HepG2 (cell line): ENCODE measurements at regions of chr15 and their contacts with region 1.

Region 1: GRCh38 chr15:40098489-40099261 is 10.0 kb downstream of the BMF start:
- DNase-seq: peak; percentile 97
- ATAC-seq: peak; percentile 95
- H3K4me3 ChIP-seq: peak overlapping the region in 1 of 3 experiments; percentile 24; a peak in 2 of 6 replicates
- H3K27ac ChIP-seq: peak overlapping the region; percentile 87
- H3K4me1 ChIP-seq: peaks cover 89% of the 10 kb centered on the region
- H3K27me3 ChIP-seq: no peaks in the 10 kb centered on the region
- CTCF ChIP-seq: 0 out of 2 replicates have a peak, but pooled peaks have one; percentile 20
- EP300 ChIP-seq: peak; percentile 96 to 100
- POLR2A ChIP-seq: peak; percentile 24 to 69; a peak in 2 of 4 replicates
- RAD21 ChIP-seq: peak; percentile 65; the same call in 1 of the 2 replicates

Region 2: DNA sequence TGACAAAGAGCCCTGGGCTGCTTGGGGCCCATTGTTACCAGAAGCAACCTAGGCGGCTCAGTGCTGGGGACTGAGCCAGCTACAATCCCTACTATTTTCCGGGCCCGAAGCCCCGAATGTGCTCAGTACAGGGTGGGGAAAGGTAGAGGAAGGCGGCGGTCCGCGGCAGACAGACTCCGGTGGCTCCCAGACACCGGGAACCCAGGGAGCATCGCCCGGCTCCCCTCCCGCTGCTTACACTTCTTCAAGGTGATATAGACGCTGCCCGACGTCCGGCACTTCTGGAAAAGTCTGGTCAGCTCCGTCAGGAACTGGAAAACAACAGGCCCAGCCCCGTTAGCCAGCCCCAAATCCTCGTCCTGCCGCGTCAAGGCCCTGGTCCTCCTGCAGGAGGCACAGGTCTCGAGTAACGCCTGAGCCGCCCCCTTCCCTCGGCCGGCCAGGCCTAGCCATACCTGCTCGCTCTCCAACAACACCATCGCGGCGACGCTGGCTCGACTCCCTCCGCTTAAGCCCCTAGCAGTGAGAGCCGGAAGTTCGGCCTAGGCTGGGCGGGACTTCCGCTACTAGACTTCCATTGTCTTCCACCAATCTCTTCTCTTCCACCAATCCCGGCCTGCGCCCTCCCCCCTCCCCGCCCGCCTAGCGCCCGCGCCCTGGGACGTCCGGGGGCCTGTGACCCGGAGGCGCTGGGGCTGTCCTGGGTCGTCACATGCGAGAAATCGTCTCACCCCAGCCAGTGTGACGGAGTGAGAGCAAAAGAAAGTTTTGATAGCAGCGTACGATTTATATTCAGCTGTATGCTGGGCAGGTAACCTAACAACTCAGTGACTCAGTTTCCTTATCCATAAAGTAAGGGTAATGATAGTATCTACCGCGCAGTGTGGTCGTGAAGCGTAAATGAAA is 59.8 kb before region 1 on chr15 and contains the start of gene SRP14:
- CTCF ChIA-PET with region 1: no interaction called
- POLR2A ChIA-PET with region 1: interaction called, 27 read pairs
- in situ Hi-C with region 1: no loop called
- intact Hi-C with region 1: no loop called
- DNase-seq: peak; percentile 91
- ATAC-seq: peak; percentile 93
- H3K4me3 ChIP-seq: peak within 1 kb of the TSS; percentile 72 to 96 (median 76)
- H3K27ac ChIP-seq: peak within 1 kb of the TSS; percentile 86
- H3K4me1 ChIP-seq: peaks cover 34% of the 10 kb centered on the region
- H3K27me3 ChIP-seq: no peaks in the 10 kb centered on the region; a peak in 2 of 5 replicates
- CTCF ChIP-seq: peak; percentile 15
- EP300 ChIP-seq: 0 out of 4 replicates have a peak, but pooled peaks of 1 of the 2 experiments have one; percentile 17
- POLR2A ChIP-seq: peak; percentile 91 to 95
- RAD21 ChIP-seq: no peak
- total RNA-seq, gene SRP14: 208 and 346 TPM in 2 replicates

Region 3: DNA sequence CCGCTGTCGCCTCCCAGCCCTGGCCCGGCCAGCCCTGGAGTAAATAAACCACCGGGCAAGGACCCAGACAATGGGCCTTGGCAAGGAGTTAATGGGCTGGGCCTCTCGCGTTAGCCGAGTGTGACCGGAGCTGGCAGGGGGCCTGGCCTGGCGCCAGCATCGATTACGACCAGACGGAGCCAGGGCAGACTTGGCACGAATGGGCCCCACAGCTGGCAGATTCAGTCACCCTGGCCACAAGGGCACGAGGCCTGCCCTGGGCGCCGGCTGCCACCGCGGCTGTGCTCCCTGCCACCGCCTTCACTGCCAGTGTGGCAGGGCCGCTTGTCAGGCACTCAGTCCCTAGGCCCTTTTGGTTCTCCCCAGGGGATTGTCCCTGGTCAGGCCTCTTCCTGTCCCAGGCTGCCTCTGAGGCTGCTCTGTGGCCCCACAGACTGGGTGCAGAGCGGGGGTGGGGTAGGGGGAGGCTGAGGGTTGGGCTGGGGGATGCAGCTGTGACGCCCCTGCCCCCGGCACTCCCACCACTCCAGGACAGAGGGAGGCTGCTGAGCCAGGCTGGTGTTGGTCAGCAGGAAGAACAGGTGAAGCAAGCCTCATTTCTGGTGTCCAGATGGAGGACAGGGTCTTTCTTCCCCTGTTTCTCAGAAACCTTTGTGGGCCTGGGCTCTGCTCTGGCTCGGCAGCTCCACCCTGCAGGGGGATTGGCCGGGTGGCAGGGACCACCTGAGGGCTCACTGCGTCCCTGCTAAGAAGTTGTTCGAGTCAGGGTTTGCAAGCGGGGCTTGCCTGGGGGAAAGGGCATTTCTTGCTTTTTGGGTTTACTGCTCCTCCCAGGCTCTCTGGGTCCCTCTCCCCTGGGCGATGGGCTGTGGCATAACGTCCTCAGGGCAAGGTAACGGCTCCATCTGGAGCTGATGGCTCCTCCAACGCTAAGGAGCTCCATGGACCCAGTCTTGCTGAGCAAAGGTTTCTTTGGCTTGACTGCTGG is 29.2 kb before region 1 on chr15:
- CTCF ChIA-PET with region 1: no interaction called
- POLR2A ChIA-PET with region 1: interaction called, 29 read pairs
- in situ Hi-C with region 1: no loop called
- intact Hi-C with region 1: no loop called
- DNase-seq: peak; percentile 76
- ATAC-seq: peak; percentile 80
- H3K4me3 ChIP-seq: peak overlapping the region; percentile 55 to 69 (median 58); a peak in 5 of 6 replicates
- H3K27ac ChIP-seq: peak overlapping the region; percentile 69
- H3K4me1 ChIP-seq: peaks cover 47% of the 10 kb centered on the region
- H3K27me3 ChIP-seq: no peaks in the 10 kb centered on the region
- CTCF ChIP-seq: no peak; the same call in 1 of the 2 replicates
- EP300 ChIP-seq: no peak
- POLR2A ChIP-seq: peak in 1 of 2 experiments; percentile 50; a peak in 1 of 4 replicates
- RAD21 ChIP-seq: peak; percentile 66

Region 4: GRCh38 chr15:40081691-40082194 is 16.9 kb before region 1 on chr15:
- CTCF ChIA-PET with region 1: no interaction called
- POLR2A ChIA-PET with region 1: interaction called, 371 read pairs
- in situ Hi-C with region 1: no loop called
- intact Hi-C with region 1: loop called (anchors 1 kb)
- DNase-seq: peak; percentile 96
- ATAC-seq: peak; percentile 98
- H3K4me3 ChIP-seq: peak overlapping the region; percentile 46 to 70 (median 69)
- H3K27ac ChIP-seq: peak overlapping the region; percentile 95
- H3K4me1 ChIP-seq: peaks cover 70% of the 10 kb centered on the region
- H3K27me3 ChIP-seq: no peaks in the 10 kb centered on the region; a peak in 1 of 5 replicates
- CTCF ChIP-seq: peak; percentile 33; the same call in 1 of the 2 replicates
- EP300 ChIP-seq: peak; percentile 81 to 92; a peak in 3 of 4 replicates
- POLR2A ChIP-seq: peak; percentile 69 to 74; a peak in 3 of 4 replicates
- RAD21 ChIP-seq: no peak; the same call in 1 of the 2 replicates

Region 5: GRCh38 chr15:40160689-40161688 is 62.3 kb after region 1 on chr15 and contains the start of gene BUB1B:
- CTCF ChIA-PET with region 1: interaction called, 3 read pairs
- POLR2A ChIA-PET with region 1: interaction called, 4 read pairs
- in situ Hi-C with region 1: no loop called
- intact Hi-C with region 1: loop called (anchors 2 kb)
- DNase-seq: peak; percentile 95
- ATAC-seq: peak; percentile 91
- H3K4me3 ChIP-seq: peak within 1 kb of the TSS; percentile 77 to 98 (median 91)
- H3K27ac ChIP-seq: peak within 1 kb of the TSS; percentile 74
- H3K4me1 ChIP-seq: peaks cover 58% of the 10 kb centered on the region
- H3K27me3 ChIP-seq: no peaks in the 10 kb centered on the region; a peak in 2 of 5 replicates
- CTCF ChIP-seq: peak; percentile 15; the same call in 1 of the 2 replicates
- EP300 ChIP-seq: no peak
- POLR2A ChIP-seq: peak; percentile 62 to 69; a peak in 3 of 4 replicates
- RAD21 ChIP-seq: no peak; the same call in 1 of the 2 replicates
- total RNA-seq, gene BUB1B: 63.5 and 71.9 TPM in 2 replicates